ENCODE measurements at regions of chr19 and their contacts with region 1.

Region 1: DNA sequence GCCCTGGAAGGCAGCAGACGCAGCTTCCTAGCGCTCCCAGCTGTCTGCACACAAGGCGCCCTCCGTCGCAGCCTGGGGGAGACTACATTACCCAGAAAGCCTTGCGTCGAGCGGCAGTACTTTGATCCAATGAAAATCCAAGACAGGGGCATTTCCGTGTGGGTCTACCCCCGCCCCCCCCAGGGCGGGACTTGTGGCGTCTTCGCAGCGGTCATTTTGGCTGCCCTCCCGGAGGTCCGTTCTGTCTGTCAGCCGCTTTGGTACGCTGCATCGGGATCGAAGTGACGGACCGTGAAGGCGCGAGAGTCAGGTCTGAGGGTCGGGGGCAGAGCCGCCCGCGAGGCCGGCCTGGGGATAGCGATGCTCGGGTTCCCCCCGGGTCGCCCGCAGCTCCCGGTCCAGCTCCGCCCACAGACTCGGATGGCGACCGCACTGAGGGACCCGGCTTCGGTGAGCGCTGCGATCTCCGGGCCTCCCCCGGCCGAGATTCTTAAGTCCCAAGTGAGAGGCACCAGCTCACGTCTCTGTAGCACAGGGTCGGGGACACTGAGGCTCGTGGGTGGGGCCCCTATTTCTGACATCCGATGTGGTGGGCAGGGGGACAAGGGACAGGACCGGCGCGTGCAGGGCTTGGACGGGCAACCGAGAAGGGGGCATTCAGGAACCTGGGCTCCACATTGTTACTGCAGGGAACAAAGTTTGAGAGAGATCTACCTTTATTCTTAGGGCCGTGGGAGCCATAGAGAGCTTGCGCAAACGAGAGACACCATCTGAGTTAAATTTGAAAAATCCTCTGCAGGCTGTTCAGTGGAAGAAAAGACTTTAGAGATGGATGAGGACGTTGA is at the start of gene ZNF211:
- DNase-seq: peak; percentile 93
- ATAC-seq: peak; percentile 99
- H3K4me3 ChIP-seq: peak within 1 kb of the TSS; percentile 67 to 95 (median 84)
- H3K4me3 Mint-ChIP-seq: peak within 1 kb of the TSS; percentile 92
- H3K27ac ChIP-seq: peak within 1 kb of the TSS; percentile 70 to 80
- H3K27ac Mint-ChIP-seq: peak within 1 kb of the TSS; percentile 88
- H3K4me1 ChIP-seq: peaks cover 11 to 17% of the 10 kb centered on the region in 2 donors
- H3K4me1 Mint-ChIP-seq: peaks cover 22% of the 10 kb centered on the region
- H3K27me3 ChIP-seq: no peaks in the 10 kb centered on the region
- H3K27me3 Mint-ChIP-seq: no peaks in the 10 kb centered on the region
- CTCF ChIP-seq: no peak
- total RNA-seq, gene ZNF211: 53.5 and 53.6 TPM in 2 replicates

Region 2: DNA sequence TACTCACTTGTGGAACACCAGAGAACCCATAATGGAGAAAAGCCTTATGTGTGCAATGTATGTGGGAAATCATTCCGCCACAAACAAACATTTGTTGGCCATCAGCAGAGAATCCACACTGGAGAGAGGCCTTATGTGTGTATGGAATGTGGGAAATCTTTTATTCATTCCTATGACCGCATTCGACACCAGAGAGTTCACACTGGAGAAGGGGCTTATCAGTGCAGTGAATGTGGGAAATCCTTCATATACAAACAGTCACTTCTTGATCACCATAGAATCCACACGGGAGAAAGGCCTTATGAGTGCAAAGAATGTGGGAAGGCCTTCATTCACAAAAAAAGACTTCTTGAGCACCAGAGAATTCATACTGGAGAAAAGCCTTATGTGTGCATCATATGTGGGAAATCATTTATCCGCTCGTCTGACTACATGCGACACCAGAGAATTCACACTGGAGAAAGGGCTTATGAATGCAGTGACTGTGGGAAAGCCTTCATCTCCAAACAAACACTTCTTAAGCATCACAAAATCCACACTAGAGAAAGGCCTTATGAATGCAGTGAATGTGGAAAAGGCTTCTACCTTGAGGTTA is 95.2 kb before region 1 on chr19:
- CTCF ChIA-PET with region 1: no interaction called
- POLR2A ChIA-PET with region 1: no interaction called
- intact Hi-C with region 1: no loop called
- DNase-seq: no peak
- ATAC-seq: no peak
- H3K4me3 ChIP-seq: peak overlapping the region in 1 of 5 experiments; percentile 21
- H3K4me3 Mint-ChIP-seq: no peak overlapping the region
- H3K27ac ChIP-seq: no peak overlapping the region
- H3K27ac Mint-ChIP-seq: no peak overlapping the region
- H3K4me1 ChIP-seq: no peaks in the 10 kb centered on the region
- H3K4me1 Mint-ChIP-seq: no peaks in the 10 kb centered on the region
- H3K27me3 ChIP-seq: no peaks in the 10 kb centered on the region
- H3K27me3 Mint-ChIP-seq: no peaks in the 10 kb centered on the region
- CTCF ChIP-seq: no peak

Region 3: GRCh38 chr19:57559404-57560025 is 73.7 kb before region 1 on chr19 and contains the start of gene ZNF550:
- CTCF ChIA-PET with region 1: interaction called, 3 read pairs
- POLR2A ChIA-PET with region 1: no interaction called
- intact Hi-C with region 1: loop called (anchors 2 kb)
- DNase-seq: peak; percentile 87
- ATAC-seq: peak; percentile 99
- H3K4me3 ChIP-seq: peak within 1 kb of the TSS; percentile 64 to 98 (median 92)
- H3K4me3 Mint-ChIP-seq: peak within 1 kb of the TSS; percentile 94
- H3K27ac ChIP-seq: peak within 1 kb of the TSS; percentile 28 to 69
- H3K27ac Mint-ChIP-seq: peak within 1 kb of the TSS; percentile 86
- H3K4me1 ChIP-seq: peaks cover 19 to 21% of the 10 kb centered on the region in 2 donors
- H3K4me1 Mint-ChIP-seq: peaks cover 30% of the 10 kb centered on the region
- H3K27me3 ChIP-seq: peaks cover 0 to 4% (median 2%) of the 10 kb centered on the region in 4 experiments
- H3K27me3 Mint-ChIP-seq: peaks cover 13% of the 10 kb centered on the region
- CTCF ChIP-seq: no peak
- total RNA-seq, gene ZNF550: 31.1 and 38.1 TPM in 2 replicates

Region 4: DNA sequence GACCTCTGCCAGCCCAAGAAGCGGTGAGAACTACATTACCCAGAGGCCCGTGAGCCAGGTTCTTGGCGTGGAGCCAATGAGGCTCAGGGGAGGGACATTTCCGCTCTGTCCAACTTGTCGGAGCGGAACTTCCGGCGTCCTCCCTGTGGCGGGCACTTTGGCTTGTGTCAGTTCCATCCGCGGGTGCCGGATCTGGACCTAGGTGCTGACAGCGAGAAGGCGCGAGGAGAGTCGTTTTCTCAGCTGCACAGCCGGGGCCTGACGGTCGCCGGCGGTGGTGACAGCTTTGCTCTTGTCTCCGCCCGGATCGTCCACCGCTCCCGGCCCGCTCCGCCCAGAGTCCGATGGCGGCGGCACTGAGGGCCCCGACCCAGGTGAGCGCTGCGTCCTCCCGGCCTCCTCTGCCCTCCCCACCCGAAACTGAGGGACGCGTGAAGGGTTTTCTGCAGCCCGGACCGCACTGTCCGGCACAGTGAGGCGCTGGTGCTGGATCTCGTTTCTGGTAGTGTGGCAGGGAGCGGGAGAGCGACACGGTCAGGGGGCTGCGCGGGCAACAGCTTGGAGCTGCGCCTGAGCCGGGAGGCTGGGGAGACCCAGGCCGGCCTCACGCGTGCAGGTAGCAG is 33.3 kb before region 1 on chr19 and contains the start of gene ZNF530:
- CTCF ChIA-PET with region 1: no interaction called
- POLR2A ChIA-PET with region 1: no interaction called
- intact Hi-C with region 1: loop called (anchors 1 kb)
- DNase-seq: peak; percentile 88
- ATAC-seq: peak; percentile 99
- H3K4me3 ChIP-seq: peak within 1 kb of the TSS; percentile 44 to 81 (median 77)
- H3K4me3 Mint-ChIP-seq: peak within 1 kb of the TSS; percentile 90
- H3K27ac ChIP-seq: peak within 1 kb of the TSS in 1 of 2 donors; percentile 52
- H3K27ac Mint-ChIP-seq: peak within 1 kb of the TSS; percentile 79
- H3K4me1 ChIP-seq: peaks cover 11 to 14% of the 10 kb centered on the region in 2 donors
- H3K4me1 Mint-ChIP-seq: peaks cover 20% of the 10 kb centered on the region
- H3K27me3 ChIP-seq: no peaks in the 10 kb centered on the region
- H3K27me3 Mint-ChIP-seq: peaks cover 3% of the 10 kb centered on the region
- CTCF ChIP-seq: no peak
- total RNA-seq, gene ZNF530: 11.2 and 11.6 TPM in 2 replicates

Region 5: GRCh38 chr19:57682226-57682766 is 49.1 kb after region 1 on chr19:
- CTCF ChIA-PET with region 1: interaction called, 3 read pairs
- POLR2A ChIA-PET with region 1: interaction called, 3 read pairs
- intact Hi-C with region 1: loop called (anchors 1 kb)
- DNase-seq: no peak
- ATAC-seq: no peak
- H3K4me3 ChIP-seq: peak overlapping the region; percentile 65 to 98 (median 90)
- H3K4me3 Mint-ChIP-seq: peak overlapping the region; percentile 98
- H3K27ac ChIP-seq: peak overlapping the region; percentile 50 to 57
- H3K27ac Mint-ChIP-seq: peak overlapping the region; percentile 91
- H3K4me1 ChIP-seq: peaks cover 13 to 25% of the 10 kb centered on the region in 2 donors
- H3K4me1 Mint-ChIP-seq: peaks cover 38% of the 10 kb centered on the region
- H3K27me3 ChIP-seq: peaks cover 0 to 4% (median 0%) of the 10 kb centered on the region in 4 experiments
- H3K27me3 Mint-ChIP-seq: peaks cover 15% of the 10 kb centered on the region
- CTCF ChIP-seq: no peak

Region 6: GRCh38 chr19:58278157-58279041 is 645.2 kb after region 1 on chr19 and contains the start of gene ZNF8:
- CTCF ChIA-PET with region 1: no interaction called
- POLR2A ChIA-PET with region 1: no interaction called
- intact Hi-C with region 1: loop called (anchors 1 kb)
- DNase-seq: peak; percentile 96
- ATAC-seq: peak; percentile 98
- H3K4me3 ChIP-seq: peak within 1 kb of the TSS; percentile 72 to 98 (median 95)
- H3K4me3 Mint-ChIP-seq: peak within 1 kb of the TSS; percentile 91
- H3K27ac ChIP-seq: peak within 1 kb of the TSS; percentile 73 to 86
- H3K27ac Mint-ChIP-seq: peak within 1 kb of the TSS; percentile 93
- H3K4me1 ChIP-seq: peaks cover 13 to 19% of the 10 kb centered on the region in 2 donors
- H3K4me1 Mint-ChIP-seq: peaks cover 38% of the 10 kb centered on the region
- H3K27me3 ChIP-seq: no peaks in the 10 kb centered on the region
- H3K27me3 Mint-ChIP-seq: no peaks in the 10 kb centered on the region
- CTCF ChIP-seq: no peak
- total RNA-seq, gene ZNF8: 7.9 and 8.0 TPM in 2 replicates